ENCODE measurements at regions of chr1 and their contacts with region 1.

Region 1: GRCh38 chr1:151098126-151098525 is 27.6 kb downstream of the GABPB2 start:
- DNase-seq: no peak
- ATAC-seq: no peak
- H3K4me3 Mint-ChIP-seq: no peak overlapping the region
- H3K27ac Mint-ChIP-seq: no peak overlapping the region
- H3K4me1 Mint-ChIP-seq: no peaks in the 10 kb centered on the region
- H3K27me3 Mint-ChIP-seq: no peaks in the 10 kb centered on the region

Region 2: GRCh38 chr1:150925816-150926741 is 172.0 kb before region 1 on chr1 and contains the start of gene SETDB1:
- CTCF ChIA-PET with region 1: no interaction called
- DNase-seq: peak; percentile 98
- ATAC-seq: peak; percentile 96
- H3K4me3 Mint-ChIP-seq: peak within 1 kb of the TSS; percentile 97
- H3K27ac Mint-ChIP-seq: peak within 1 kb of the TSS; percentile 98
- H3K4me1 Mint-ChIP-seq: peaks cover 35% of the 10 kb centered on the region
- H3K27me3 Mint-ChIP-seq: no peaks in the 10 kb centered on the region
- total RNA-seq, gene SETDB1: 61.5 to 67.6 TPM

Region 3: DNA sequence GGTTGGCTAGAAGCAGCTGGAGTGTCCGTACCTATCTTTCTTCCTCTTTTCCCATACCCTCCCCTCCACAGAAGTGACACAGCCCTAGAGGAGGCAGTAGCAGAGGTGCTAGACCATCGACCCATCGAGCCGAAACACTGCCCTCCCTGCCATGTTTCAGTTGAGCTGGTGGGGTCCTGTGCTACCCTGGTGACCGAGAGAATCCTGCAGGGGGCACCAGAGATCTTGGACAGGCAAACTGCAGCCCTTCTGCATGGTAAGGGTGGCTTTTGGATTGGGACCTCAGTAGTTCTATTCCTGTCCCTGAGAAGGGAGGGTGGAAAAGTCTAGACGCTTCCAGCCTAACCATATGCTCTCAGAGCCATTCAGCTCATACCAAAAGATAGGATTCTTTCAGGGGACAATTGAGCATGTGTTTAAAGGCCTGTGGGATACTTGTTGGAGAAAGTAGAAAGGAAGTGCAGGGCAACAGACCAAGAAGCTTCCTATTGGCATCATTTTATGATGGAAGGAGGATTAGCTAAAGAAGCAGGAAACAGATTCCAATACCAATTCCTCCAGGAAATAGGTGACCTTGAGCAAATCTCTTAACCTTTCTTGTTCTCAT is 73.5 kb before region 1 on chr1:
- CTCF ChIA-PET with region 1: interaction called, 29 read pairs
- DNase-seq: peak; percentile 91
- ATAC-seq: peak; percentile 100
- H3K4me3 Mint-ChIP-seq: peak overlapping the region; percentile 25
- H3K27ac Mint-ChIP-seq: peak overlapping the region; percentile 52
- H3K4me1 Mint-ChIP-seq: peaks cover 5% of the 10 kb centered on the region
- H3K27me3 Mint-ChIP-seq: no peaks in the 10 kb centered on the region

Region 4: GRCh38 chr1:151085953-151086559 is 12.1 kb before region 1 on chr1:
- CTCF ChIA-PET with region 1: interaction called, 13 read pairs
- DNase-seq: no peak
- ATAC-seq: no peak
- H3K4me3 Mint-ChIP-seq: no peak overlapping the region
- H3K27ac Mint-ChIP-seq: no peak overlapping the region
- H3K4me1 Mint-ChIP-seq: peaks cover 2% of the 10 kb centered on the region
- H3K27me3 Mint-ChIP-seq: no peaks in the 10 kb centered on the region

Region 5: DNA sequence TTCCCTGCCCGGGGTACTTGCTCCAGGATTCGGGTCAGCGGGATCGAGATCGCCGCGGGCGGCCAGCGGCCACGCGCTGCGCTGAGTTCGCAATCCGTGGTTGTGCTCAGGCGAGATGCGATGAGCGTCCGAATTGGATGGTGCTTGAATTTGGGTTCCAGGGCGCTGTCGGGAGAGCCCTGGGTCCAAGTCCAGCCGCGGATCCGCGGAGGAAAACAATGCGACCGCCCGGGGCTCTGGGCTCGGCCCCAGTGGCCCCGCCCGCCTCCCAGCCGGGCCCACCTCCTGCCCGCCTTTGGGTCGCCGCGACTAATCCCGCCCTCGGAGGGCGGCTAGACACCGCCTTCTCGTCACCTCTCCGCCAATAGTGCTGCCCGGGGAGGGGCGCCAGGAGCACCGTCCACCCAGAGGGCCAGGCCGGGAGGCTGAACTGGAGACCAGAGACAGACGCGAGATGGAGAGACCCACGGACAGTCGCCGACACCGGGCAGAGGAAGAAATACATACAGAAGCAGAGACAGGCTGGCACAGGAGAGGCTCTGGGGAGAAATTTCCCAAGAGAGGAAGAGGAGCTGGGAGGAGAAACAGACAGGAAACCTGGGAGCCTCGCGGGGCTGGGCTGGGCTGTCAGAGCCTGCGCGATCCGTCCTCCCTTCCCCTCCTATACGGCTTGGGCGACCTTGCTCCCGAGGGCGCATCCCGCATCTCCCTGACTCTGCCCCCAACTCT is 48.5 kb after region 1 on chr1 and contains the start of gene SEMA6C:
- CTCF ChIA-PET with region 1: interaction called, 12 read pairs
- DNase-seq: peak; percentile 92
- ATAC-seq: peak; percentile 100
- H3K4me3 Mint-ChIP-seq: peak within 1 kb of the TSS; percentile 85
- H3K27ac Mint-ChIP-seq: peak within 1 kb of the TSS; percentile 50
- H3K4me1 Mint-ChIP-seq: peaks cover 10% of the 10 kb centered on the region
- H3K27me3 Mint-ChIP-seq: peaks cover 24% of the 10 kb centered on the region
- total RNA-seq, gene SEMA6C: 0.84 to 1.7 TPM

Region 6: GRCh38 chr1:151165738-151166505 is 67.8 kb after region 1 on chr1 and contains the starts of genes LYSMD1 and SCNM1:
- CTCF ChIA-PET with region 1: interaction called, 11 read pairs
- DNase-seq: peak; percentile 99
- ATAC-seq: peak; percentile 97
- H3K4me3 Mint-ChIP-seq: peak within 1 kb of the TSS; percentile 91
- H3K27ac Mint-ChIP-seq: peak within 1 kb of the TSS; percentile 89
- H3K4me1 Mint-ChIP-seq: peaks cover 48% of the 10 kb centered on the region
- H3K27me3 Mint-ChIP-seq: no peaks in the 10 kb centered on the region
- total RNA-seq, gene LYSMD1: 4.4 to 4.9 TPM
- total RNA-seq, gene SCNM1: 60.6 to 69.6 TPM

Region 7: GRCh38 chr1:151443846-151444782 is 346.0 kb after region 1 on chr1:
- CTCF ChIA-PET with region 1: no interaction called
- DNase-seq: peak; percentile 84
- ATAC-seq: peak; percentile 97
- H3K4me3 Mint-ChIP-seq: no peak overlapping the region
- H3K27ac Mint-ChIP-seq: peak overlapping the region; percentile 53
- H3K4me1 Mint-ChIP-seq: peaks cover 42% of the 10 kb centered on the region
- H3K27me3 Mint-ChIP-seq: no peaks in the 10 kb centered on the region